A673 (cell line): ENCODE measurements at regions of chr5 and their contacts with region 1.

Region 1: GRCh38 chr5:72566746-72567145 is 59.5 kb upstream of the ZNF366 start:
- DNase-seq: no peak
- H3K4me3 ChIP-seq: no peak overlapping the region
- H3K27ac ChIP-seq: no peak overlapping the region
- H3K4me1 ChIP-seq: peaks cover 3% of the 10 kb centered on the region
- H3K27me3 ChIP-seq: peaks cover 20% of the 10 kb centered on the region
- CTCF ChIP-seq: no peak

Region 2: DNA sequence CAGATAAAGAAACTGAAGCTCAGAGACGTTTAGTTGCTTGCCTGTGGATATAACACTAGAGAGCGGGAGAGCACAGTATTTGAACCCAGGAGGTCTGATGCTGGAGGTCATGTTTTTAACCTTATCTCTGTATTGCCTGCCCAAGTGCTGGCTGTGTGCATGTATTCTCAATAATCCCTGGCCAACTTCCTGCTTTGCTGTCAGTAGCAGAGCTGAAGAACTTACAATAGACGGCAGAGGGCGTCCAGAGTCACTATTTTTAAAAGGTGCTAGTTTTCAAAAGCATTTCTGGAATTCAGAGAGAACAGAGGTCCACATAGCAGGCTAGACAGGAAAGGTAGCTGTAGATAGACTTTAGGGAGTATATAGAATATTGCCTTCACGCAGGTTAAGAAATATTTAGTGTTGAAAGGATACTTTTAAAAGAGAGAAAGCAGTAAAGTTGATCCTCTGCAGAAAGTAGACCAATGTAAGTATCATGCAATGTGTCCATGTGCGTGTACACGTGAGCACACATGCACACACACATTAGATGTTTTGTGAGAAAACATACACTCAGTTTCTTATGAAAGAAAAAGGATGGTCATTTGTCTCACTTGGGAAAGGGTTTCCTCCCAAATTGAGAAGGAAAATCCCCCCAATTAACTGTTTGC is 200.3 kb before region 1 on chr5:
- CTCF ChIA-PET with region 1: no interaction called
- POLR2A ChIA-PET with region 1: no interaction called
- intact Hi-C with region 1: no loop called
- DNase-seq: peak; percentile 72
- H3K4me3 ChIP-seq: no peak overlapping the region
- H3K27ac ChIP-seq: no peak overlapping the region
- H3K4me1 ChIP-seq: peaks cover 2% of the 10 kb centered on the region
- H3K27me3 ChIP-seq: no peaks in the 10 kb centered on the region
- CTCF ChIP-seq: peak; percentile 80

Region 3: GRCh38 chr5:72556351-72557166 is 10.2 kb before region 1 on chr5:
- CTCF ChIA-PET with region 1: no interaction called
- POLR2A ChIA-PET with region 1: interaction called, 12 read pairs
- intact Hi-C with region 1: no loop called
- DNase-seq: peak; percentile 68
- H3K4me3 ChIP-seq: peak overlapping the region; percentile 29
- H3K27ac ChIP-seq: peak overlapping the region; percentile 56
- H3K4me1 ChIP-seq: peaks cover 23% of the 10 kb centered on the region
- H3K27me3 ChIP-seq: no peaks in the 10 kb centered on the region
- CTCF ChIP-seq: 0 out of 2 replicates have a peak, but pooled peaks have one; percentile 31